ENCODE measurements at regions of chr17 and their contacts with region 1.

Region 1: DNA sequence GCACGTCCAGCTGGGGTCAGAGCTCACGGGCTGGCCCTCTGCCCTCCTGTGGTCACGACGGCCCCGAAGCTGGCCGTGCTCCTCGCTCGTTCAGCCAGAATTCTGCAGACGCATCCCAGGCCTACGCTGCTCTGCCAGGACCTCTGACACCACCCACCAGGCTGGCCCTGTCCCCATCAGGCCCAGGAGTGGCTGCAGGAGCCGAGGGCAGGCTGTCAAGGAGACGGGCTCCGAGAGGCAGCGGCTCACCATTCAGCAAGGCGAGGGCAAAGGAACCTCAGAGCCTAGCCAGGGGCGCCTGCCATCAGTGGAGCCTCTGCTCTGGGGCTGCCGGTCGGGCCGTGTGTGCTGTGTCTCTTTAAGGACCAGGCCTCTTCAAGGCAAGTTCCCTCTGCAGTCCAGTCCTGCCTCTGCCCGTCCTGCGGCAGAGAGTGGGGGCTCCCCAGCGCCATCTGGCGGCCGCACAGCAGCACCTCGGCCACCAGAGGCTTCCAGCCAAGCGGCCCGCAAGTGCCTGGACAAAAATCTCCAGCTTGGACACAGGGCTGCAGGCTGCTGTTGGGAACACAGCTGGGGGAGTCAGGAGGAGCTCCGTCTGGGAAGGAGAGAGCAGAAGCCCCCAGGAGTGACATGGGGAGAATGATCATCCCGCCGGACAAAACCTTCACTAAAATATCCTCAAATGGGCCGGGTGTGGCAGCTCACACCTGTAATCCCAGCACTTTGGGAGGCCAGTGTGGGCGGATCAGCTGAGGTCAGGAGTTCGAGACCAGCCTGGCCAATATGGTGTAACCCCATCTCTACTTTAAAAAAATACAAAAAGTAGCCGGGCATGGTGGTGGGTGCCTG is 7.4 kb upstream of the ABR start:
- DNase-seq: peak; percentile 57 to 88 (median 71)
- ATAC-seq: peak; percentile 97
- H3K4me3 ChIP-seq: no peak overlapping the region
- H3K4me3 Mint-ChIP-seq: no peak overlapping the region
- H3K27ac ChIP-seq: no peak overlapping the region
- H3K27ac Mint-ChIP-seq: no peak overlapping the region
- H3K4me1 ChIP-seq: peaks cover 18% of the 10 kb centered on the region
- H3K4me1 Mint-ChIP-seq: peaks cover 4% of the 10 kb centered on the region
- H3K27me3 ChIP-seq: no peaks in the 10 kb centered on the region
- H3K27me3 Mint-ChIP-seq: peaks cover 10% of the 10 kb centered on the region
- CTCF ChIP-seq: peak; percentile 96

Region 2: DNA sequence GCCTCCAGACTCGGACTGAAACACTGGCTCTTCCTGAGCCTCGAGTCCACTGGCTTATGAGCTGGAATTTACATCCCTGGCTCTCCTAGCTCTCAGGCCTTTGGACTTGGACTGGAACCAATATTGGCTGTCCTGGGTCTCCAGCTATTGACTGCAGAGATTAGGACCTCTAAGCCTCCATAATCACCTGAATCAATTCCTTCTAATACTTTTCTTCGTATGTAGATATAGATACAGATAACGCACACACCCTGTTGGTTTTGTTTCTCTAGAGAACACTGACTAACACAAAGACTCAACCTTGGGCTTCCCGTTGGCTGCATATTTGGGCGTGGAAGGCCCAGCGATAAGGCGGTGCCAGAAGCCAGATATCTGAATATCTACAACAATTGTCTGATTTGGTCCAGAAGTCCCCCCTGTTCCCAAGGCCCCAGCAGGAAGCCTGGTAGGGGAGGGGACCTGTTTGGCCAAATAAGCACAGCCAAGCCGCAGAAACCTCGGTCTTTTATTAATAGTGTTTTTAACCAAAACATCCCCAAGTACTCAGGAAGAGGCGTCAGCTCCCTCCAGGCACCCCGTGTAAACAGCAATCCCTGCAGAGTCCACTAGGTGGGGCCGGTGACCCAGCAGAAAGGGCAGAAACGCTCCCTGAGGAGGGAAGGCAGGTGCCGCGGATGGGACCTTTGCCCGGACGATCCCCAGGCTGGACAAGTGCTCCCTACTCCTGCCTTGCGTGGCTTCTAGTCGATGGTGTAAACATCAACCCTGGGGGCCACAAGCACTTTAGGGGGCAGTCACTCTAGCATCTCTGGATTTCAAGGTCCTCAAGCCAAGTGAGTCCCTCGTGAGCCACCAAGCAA is 64.4 kb before region 1 on chr17:
- CTCF ChIA-PET with region 1: interaction called, 28 read pairs
- POLR2A ChIA-PET with region 1: no interaction called
- intact Hi-C with region 1: loop called (anchors 1 kb)
- DNase-seq: peak; percentile 65 to 89 (median 84)
- ATAC-seq: peak; percentile 99
- H3K4me3 ChIP-seq: no peak overlapping the region
- H3K4me3 Mint-ChIP-seq: no peak overlapping the region
- H3K27ac ChIP-seq: no peak overlapping the region
- H3K27ac Mint-ChIP-seq: no peak overlapping the region
- H3K4me1 ChIP-seq: peaks cover 15% of the 10 kb centered on the region
- H3K4me1 Mint-ChIP-seq: peaks cover 8% of the 10 kb centered on the region
- H3K27me3 ChIP-seq: no peaks in the 10 kb centered on the region
- H3K27me3 Mint-ChIP-seq: peaks cover 6% of the 10 kb centered on the region
- CTCF ChIP-seq: peak; percentile 91

Region 3: GRCh38 chr17:1137465-1137894 is 49.7 kb before region 1 on chr17:
- CTCF ChIA-PET with region 1: no interaction called
- POLR2A ChIA-PET with region 1: no interaction called
- intact Hi-C with region 1: no loop called
- DNase-seq: peak in 4 of 14 experiments; percentile 26 to 61 (median 53)
- ATAC-seq: peak; percentile 48
- H3K4me3 ChIP-seq: no peak overlapping the region
- H3K4me3 Mint-ChIP-seq: no peak overlapping the region
- H3K27ac ChIP-seq: no peak overlapping the region
- H3K27ac Mint-ChIP-seq: no peak overlapping the region
- H3K4me1 ChIP-seq: no peaks in the 10 kb centered on the region
- H3K4me1 Mint-ChIP-seq: no peaks in the 10 kb centered on the region
- H3K27me3 ChIP-seq: no peaks in the 10 kb centered on the region
- H3K27me3 Mint-ChIP-seq: no peaks in the 10 kb centered on the region
- CTCF ChIP-seq: no peak

Region 4: DNA sequence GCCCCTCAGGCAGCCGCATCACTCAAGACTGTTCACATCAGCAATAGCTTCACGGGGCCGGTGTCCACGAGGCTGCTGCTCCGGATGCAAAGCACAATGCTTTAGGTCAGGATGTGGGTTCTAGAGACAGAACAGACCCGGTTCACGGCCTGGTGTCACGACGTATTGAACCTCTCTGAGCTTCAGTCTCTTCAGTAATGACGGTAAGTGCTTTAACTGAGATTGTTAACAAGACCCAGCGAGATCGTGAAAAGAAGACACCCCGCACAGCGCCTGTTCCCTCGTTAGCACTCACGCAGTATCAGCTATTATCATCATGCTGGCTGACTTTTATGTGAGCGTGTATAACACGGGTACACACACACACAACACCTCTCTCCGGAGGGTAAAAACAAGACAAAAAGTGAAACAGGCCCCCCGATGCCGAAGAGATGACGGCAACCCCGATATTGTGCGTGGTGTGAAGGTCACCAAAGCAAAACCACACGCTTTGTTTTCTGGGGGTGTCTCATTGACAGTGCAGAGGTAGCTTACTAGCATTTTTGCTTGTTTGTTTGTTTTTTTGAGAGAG is 14.1 kb after region 1 on chr17:
- CTCF ChIA-PET with region 1: interaction called, 17 read pairs
- POLR2A ChIA-PET with region 1: no interaction called
- intact Hi-C with region 1: no loop called
- DNase-seq: peak in 11 of 14 experiments; percentile 16 to 84 (median 53)
- ATAC-seq: peak; percentile 45
- H3K4me3 ChIP-seq: no peak overlapping the region
- H3K4me3 Mint-ChIP-seq: peak overlapping the region; percentile 45
- H3K27ac ChIP-seq: peak overlapping the region in 1 of 2 donors; percentile 12
- H3K27ac Mint-ChIP-seq: peak overlapping the region; percentile 6
- H3K4me1 ChIP-seq: peaks cover 64% of the 10 kb centered on the region
- H3K4me1 Mint-ChIP-seq: peaks cover 28% of the 10 kb centered on the region
- H3K27me3 ChIP-seq: no peaks in the 10 kb centered on the region
- H3K27me3 Mint-ChIP-seq: no peaks in the 10 kb centered on the region
- CTCF ChIP-seq: no peak

Measured in CD4-positive, alpha-beta T cell (primary cell).